ENCODE measurements at regions of chr15 and their contacts with region 1.

Region 1: GRCh38 chr15:43749690-43750345 is 3.6 kb downstream of the PDIA3 start:
- DNase-seq: peak; percentile 78
- ATAC-seq: peak; percentile 42
- H3K4me3 ChIP-seq: peak overlapping the region; percentile 73
- H3K27ac ChIP-seq: no peak overlapping the region; the same call in 1 of the 2 replicates
- H3K4me1 ChIP-seq: peaks cover 8% of the 10 kb centered on the region
- H3K27me3 ChIP-seq: no peaks in the 10 kb centered on the region
- CTCF ChIP-seq: no peak
- EP300 ChIP-seq: no peak
- POLR2A ChIP-seq: no peak
- RAD21 ChIP-seq: no peak

Region 2: DNA sequence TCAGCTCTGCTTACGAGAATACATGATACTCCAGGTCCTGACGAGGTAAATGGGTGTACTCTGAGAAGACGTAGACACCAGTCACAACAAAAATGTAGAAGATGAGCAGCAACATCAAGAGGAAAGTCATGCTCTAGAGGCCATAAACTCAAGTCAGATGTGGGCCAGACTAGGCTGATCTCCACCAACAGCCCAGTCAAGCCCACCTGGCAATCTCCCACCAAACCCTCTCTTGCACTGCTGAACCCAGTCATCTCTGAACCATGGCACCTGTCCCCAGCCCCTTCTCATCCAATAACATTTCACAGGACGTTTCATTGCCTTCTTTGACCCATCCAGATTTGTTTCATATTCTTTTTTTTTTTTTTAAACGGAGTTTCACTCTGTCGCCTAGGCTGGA is 14.4 kb before region 1 on chr15:
- CTCF ChIA-PET with region 1: interaction called, 3 read pairs
- POLR2A ChIA-PET with region 1: interaction called, 5 read pairs
- RAD21 ChIA-PET with region 1: interaction called, 10 read pairs
- SMC1A ChIA-PET with region 1: interaction called, 3 read pairs
- in situ Hi-C with region 1: no loop called
- intact Hi-C with region 1: no loop called
- DNase-seq: no peak
- ATAC-seq: peak; percentile 79
- H3K4me3 ChIP-seq: peak overlapping the region; percentile 63
- H3K27ac ChIP-seq: peak overlapping the region; percentile 74
- H3K4me1 ChIP-seq: no peaks in the 10 kb centered on the region
- H3K27me3 ChIP-seq: no peaks in the 10 kb centered on the region
- CTCF ChIP-seq: no peak
- EP300 ChIP-seq: no peak
- POLR2A ChIP-seq: no peak
- RAD21 ChIP-seq: no peak

Region 3: DNA sequence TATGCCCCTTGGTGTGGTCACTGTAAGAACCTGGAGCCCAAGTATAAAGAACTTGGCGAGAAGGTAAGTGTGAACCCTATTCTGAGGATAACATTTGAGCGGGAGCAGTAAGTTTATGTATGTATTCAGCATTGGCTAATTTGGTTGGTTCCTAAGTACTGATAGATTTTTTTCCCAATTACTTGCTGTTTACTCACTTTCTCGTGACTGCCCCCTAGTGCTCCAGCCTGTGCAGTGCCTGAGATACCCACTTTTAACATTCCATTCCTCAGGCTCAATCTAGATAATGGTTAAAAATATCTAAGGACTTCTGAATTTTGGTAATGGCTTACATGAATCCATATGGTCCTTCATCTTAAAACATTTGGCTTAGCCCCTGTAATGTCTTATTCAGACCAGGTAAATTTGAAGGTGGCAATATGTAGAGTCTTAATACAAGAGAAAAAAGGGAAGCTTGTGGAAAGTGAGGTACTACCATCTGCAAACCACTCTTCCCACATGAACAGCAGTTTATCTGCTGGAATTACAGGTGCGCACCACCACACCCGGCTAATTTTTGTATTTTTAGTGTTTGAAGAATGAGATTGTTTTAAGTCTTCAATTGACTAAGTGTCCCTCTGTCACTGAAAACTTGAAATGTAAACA is 19.9 kb after region 1 on chr15:
- CTCF ChIA-PET with region 1: interaction called, 30 read pairs
- POLR2A ChIA-PET with region 1: interaction called, 3 read pairs
- RAD21 ChIA-PET with region 1: interaction called, 4 read pairs
- SMC1A ChIA-PET with region 1: interaction called, 28 read pairs
- in situ Hi-C with region 1: no loop called
- intact Hi-C with region 1: no loop called
- DNase-seq: no peak
- ATAC-seq: peak; percentile 81
- H3K4me3 ChIP-seq: no peak overlapping the region
- H3K27ac ChIP-seq: no peak overlapping the region
- H3K4me1 ChIP-seq: no peaks in the 10 kb centered on the region
- H3K27me3 ChIP-seq: no peaks in the 10 kb centered on the region
- CTCF ChIP-seq: peak; percentile 83 to 92 (median 84)
- EP300 ChIP-seq: no peak
- POLR2A ChIP-seq: no peak
- RAD21 ChIP-seq: peak; percentile 60

Region 4: GRCh38 chr15:43776718-43777583 is 27.1 kb after region 1 on chr15 and contains the start of gene ELL3:
- CTCF ChIA-PET with region 1: interaction called, 30 read pairs
- POLR2A ChIA-PET with region 1: interaction called, 9 read pairs
- RAD21 ChIA-PET with region 1: interaction called, 8 read pairs
- SMC1A ChIA-PET with region 1: interaction called, 28 read pairs
- in situ Hi-C with region 1: no loop called
- intact Hi-C with region 1: no loop called
- DNase-seq: peak; percentile 78
- ATAC-seq: peak; percentile 86
- H3K4me3 ChIP-seq: peak within 1 kb of the TSS; percentile 78
- H3K27ac ChIP-seq: peak within 1 kb of the TSS; percentile 91
- H3K4me1 ChIP-seq: peaks cover 16% of the 10 kb centered on the region
- H3K27me3 ChIP-seq: no peaks in the 10 kb centered on the region
- CTCF ChIP-seq: peak; percentile 74 to 78 (median 75)
- EP300 ChIP-seq: no peak; a peak in 1 of 4 replicates
- POLR2A ChIP-seq: peak; percentile 70
- RAD21 ChIP-seq: peak; percentile 31; the same call in 1 of the 2 replicates
- polyA plus RNA-seq, gene ELL3: 19.6 to 26.4 TPM

Region 5: DNA sequence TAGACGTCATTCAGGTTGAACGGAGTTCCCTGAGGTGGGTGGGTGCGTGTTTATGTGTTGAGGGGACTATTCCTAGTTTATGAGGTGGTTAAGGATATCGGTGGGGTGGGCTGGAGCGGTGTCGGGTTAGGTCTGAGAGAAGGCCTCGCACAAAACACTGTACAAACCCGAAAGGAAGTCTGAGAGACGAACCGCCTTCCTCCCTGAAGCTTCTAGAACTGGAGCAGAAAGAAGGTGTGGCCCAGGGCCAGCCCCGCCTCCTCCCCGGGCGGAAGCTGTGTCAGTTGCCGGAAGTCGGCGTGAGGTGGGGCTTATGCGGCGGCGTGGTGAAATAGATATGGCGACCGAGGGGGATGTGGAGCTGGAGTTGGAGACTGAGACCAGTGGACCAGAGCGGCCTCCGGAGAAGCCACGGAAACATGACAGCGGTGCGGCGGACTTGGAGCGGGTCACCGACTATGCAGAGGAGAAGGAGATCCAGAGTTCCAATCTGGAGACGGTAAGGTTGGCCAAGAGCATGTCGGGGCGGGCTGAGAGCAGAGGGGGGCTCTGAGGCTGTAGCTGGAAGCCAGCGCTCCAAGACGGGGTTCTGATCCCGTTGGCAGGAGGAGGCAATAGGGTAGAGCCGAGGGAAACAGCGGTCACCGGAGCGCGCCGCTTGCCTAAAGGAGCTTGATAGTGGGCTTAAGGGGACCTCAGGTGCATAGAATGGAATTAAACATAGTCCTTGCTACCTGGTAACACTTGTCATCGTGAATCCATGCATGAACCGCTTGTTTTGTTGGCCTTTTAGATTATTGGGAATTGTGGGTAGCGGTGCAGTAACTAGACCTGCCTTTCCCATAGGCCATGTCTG is 50.7 kb after region 1 on chr15 and contains the start of gene HYPK:
- CTCF ChIA-PET with region 1: interaction called, 4 read pairs
- POLR2A ChIA-PET with region 1: interaction called, 4 read pairs
- RAD21 ChIA-PET with region 1: interaction called, 4 read pairs
- SMC1A ChIA-PET with region 1: interaction called, 4 read pairs
- in situ Hi-C with region 1: loop called (anchors 5 kb)
- intact Hi-C with region 1: no loop called
- DNase-seq: peak; percentile 55
- ATAC-seq: peak; percentile 93
- H3K4me3 ChIP-seq: peak within 1 kb of the TSS; percentile 78
- H3K27ac ChIP-seq: peak within 1 kb of the TSS; percentile 75
- H3K4me1 ChIP-seq: peaks cover 24% of the 10 kb centered on the region
- H3K27me3 ChIP-seq: no peaks in the 10 kb centered on the region
- CTCF ChIP-seq: no peak
- EP300 ChIP-seq: peak in 1 of 2 experiments; percentile 35; a peak in 2 of 4 replicates
- POLR2A ChIP-seq: peak; percentile 90
- RAD21 ChIP-seq: no peak
- polyA plus RNA-seq, gene HYPK: 8.6 to 11.0 TPM

Region 6: DNA sequence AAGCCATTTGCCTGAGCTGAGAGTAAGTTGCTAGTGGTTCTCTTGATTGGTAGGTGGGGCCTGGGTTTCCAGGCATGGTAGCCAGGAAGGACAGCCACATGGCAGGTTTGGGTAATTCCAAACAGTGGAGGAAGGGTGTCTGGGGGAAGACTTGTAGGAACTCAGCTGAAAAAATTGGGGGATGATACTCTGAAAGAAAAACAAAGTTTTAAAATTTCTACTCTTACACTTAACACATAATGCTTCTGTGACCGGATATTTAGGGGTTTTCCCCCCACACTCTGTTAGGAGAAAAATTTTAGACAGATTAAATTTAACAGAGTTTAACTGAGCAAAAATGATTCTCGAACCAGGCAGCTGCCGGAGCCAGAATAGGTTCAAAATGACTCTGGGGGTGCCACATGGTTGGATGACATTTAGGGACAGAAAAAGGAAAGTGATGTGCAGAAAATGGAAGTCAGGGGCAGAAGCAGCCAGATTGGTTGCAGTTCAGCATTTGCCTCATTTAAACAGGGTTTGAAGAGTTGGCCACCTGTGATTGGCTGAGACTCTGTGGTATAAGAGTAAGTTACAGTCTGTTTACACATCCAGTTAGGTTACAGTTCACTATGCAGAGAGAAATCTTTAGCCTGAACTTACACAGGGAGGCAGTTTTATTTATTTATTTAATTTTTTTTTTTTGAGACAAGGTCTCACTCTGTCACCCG is 969.6 kb after region 1 on chr15:
- CTCF ChIA-PET with region 1: no interaction called
- POLR2A ChIA-PET with region 1: no interaction called
- RAD21 ChIA-PET with region 1: no interaction called
- SMC1A ChIA-PET with region 1: no interaction called
- in situ Hi-C with region 1: no loop called
- intact Hi-C with region 1: loop called (anchors 5 kb)
- DNase-seq: peak; percentile 91
- ATAC-seq: peak; percentile 62
- H3K4me3 ChIP-seq: no peak overlapping the region
- H3K27ac ChIP-seq: peak overlapping the region; percentile 83
- H3K4me1 ChIP-seq: peaks cover 79% of the 10 kb centered on the region
- H3K27me3 ChIP-seq: no peaks in the 10 kb centered on the region
- CTCF ChIP-seq: no peak
- EP300 ChIP-seq: peak in 1 of 2 experiments; percentile 59; a peak in 1 of 4 replicates
- POLR2A ChIP-seq: peak; percentile 86
- RAD21 ChIP-seq: 0 out of 2 replicates have a peak, but pooled peaks have one; percentile 0

Measured in GM12878 (cell line).